B cell (primary cell): ENCODE measurements at regions of chr5 and their contacts with region 1.

Region 1: DNA sequence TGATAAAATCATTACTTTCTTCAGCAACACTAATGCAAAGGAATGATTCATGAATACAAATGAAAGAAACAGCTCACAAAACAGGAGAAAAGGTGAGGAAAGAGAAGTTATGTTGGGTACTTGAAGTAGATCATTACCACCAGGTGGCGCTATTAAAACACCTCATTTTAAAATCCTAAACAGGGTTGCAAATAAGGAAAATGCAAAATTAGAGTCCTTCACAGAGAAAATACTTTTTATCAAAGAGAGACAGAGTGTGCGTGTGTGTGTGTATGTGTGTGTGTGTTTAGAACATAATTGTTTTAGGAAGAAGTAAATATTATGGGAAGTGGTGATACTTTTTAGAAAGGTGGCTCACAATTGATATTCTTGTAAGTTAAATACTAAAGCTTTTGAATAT is 49.5 kb upstream of the CD180 start:
- DNase-seq: peak; percentile 78
- ATAC-seq: peak; percentile 31
- H3K4me3 ChIP-seq: no peak overlapping the region
- H3K4me3 Mint-ChIP-seq: no peak overlapping the region
- H3K27ac ChIP-seq: no peak overlapping the region
- H3K27ac Mint-ChIP-seq: no peak overlapping the region
- H3K4me1 ChIP-seq: peaks cover 5 to 8% of the 10 kb centered on the region in 2 donors
- H3K4me1 Mint-ChIP-seq: peaks cover 5% of the 10 kb centered on the region
- H3K27me3 ChIP-seq: no peaks in the 10 kb centered on the region
- H3K27me3 Mint-ChIP-seq: no peaks in the 10 kb centered on the region
- CTCF ChIP-seq: peak; percentile 93

Region 2: GRCh38 chr5:67165526-67166459 is 80.3 kb before region 1 on chr5:
- CTCF ChIA-PET with region 1: interaction called, 19 read pairs
- POLR2A ChIA-PET with region 1: no interaction called
- intact Hi-C with region 1: no loop called
- DNase-seq: peak; percentile 87
- ATAC-seq: peak; percentile 83
- H3K4me3 ChIP-seq: peak overlapping the region in 4 of 5 experiments; percentile 38 to 63 (median 55)
- H3K4me3 Mint-ChIP-seq: peak overlapping the region; percentile 89
- H3K27ac ChIP-seq: peak overlapping the region; percentile 78 to 83
- H3K27ac Mint-ChIP-seq: peak overlapping the region; percentile 97
- H3K4me1 ChIP-seq: peaks cover 26 to 34% of the 10 kb centered on the region in 2 donors
- H3K4me1 Mint-ChIP-seq: peaks cover 27% of the 10 kb centered on the region
- H3K27me3 ChIP-seq: no peaks in the 10 kb centered on the region
- H3K27me3 Mint-ChIP-seq: no peaks in the 10 kb centered on the region
- CTCF ChIP-seq: peak; percentile 80

Region 3: GRCh38 chr5:67221487-67222242 is 24.4 kb before region 1 on chr5:
- CTCF ChIA-PET with region 1: interaction called, 36 read pairs
- POLR2A ChIA-PET with region 1: no interaction called
- intact Hi-C with region 1: no loop called
- DNase-seq: peak; percentile 71
- ATAC-seq: peak; percentile 70
- H3K4me3 ChIP-seq: peak overlapping the region in 4 of 5 experiments; percentile 23 to 59 (median 42)
- H3K4me3 Mint-ChIP-seq: peak overlapping the region; percentile 87
- H3K27ac ChIP-seq: peak overlapping the region; percentile 61 to 71
- H3K27ac Mint-ChIP-seq: peak overlapping the region; percentile 97
- H3K4me1 ChIP-seq: peaks cover 41 to 48% of the 10 kb centered on the region in 2 donors
- H3K4me1 Mint-ChIP-seq: peaks cover 53% of the 10 kb centered on the region
- H3K27me3 ChIP-seq: no peaks in the 10 kb centered on the region
- H3K27me3 Mint-ChIP-seq: no peaks in the 10 kb centered on the region
- CTCF ChIP-seq: no peak

Region 4: GRCh38 chr5:67263656-67264408 is 17.7 kb after region 1 on chr5:
- CTCF ChIA-PET with region 1: interaction called, 16 read pairs
- POLR2A ChIA-PET with region 1: no interaction called
- intact Hi-C with region 1: no loop called
- DNase-seq: no peak
- ATAC-seq: no peak
- H3K4me3 ChIP-seq: no peak overlapping the region
- H3K4me3 Mint-ChIP-seq: no peak overlapping the region
- H3K27ac ChIP-seq: no peak overlapping the region
- H3K27ac Mint-ChIP-seq: no peak overlapping the region
- H3K4me1 ChIP-seq: no peaks in the 10 kb centered on the region
- H3K4me1 Mint-ChIP-seq: no peaks in the 10 kb centered on the region
- H3K27me3 ChIP-seq: no peaks in the 10 kb centered on the region
- H3K27me3 Mint-ChIP-seq: peaks cover 3% of the 10 kb centered on the region
- CTCF ChIP-seq: no peak

Region 5: DNA sequence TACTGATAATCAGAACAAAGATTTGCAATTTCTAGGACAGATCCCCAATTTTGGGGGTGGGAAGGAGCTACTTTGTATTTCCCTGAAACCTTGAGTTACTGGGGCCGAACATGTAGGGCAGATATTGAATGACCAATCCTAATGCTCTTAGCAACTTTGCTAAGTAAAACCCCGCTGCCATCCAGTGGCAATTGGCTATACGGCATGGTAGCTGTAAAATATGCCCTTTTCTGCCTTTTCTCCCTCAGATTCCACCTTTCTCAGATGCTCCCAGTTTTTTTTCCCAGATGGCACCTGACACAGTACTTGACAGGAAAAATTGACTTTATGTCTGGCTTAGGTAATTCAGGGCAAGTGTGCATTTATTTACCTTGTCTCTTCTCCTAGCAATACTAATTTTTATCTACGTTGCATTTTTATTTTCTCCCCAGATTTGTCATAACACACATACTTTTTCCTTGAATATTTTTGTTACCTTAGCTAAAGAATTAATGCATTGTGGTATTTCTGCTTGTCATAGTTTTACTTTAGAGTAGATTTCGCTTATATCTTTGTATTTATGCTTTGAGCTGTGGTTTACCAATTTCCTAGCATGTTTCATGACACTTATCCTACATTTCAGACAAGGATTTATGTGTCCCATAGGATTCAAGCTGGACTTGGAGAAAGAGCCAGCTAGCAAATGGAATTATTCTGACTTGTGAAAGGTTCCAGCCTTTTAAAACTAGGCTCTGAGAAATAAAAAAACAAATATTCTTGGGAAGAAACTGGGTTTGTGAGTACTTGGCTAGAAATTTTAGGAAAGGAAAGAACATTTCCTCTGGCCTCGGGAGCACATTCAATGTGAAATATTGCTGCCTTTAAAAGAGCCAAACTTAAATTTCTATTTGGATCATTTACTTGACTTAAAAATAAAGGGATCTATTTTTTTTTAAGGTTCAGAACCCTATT is 1006.8 kb after region 1 on chr5:
- CTCF ChIA-PET with region 1: interaction called, 116 read pairs
- POLR2A ChIA-PET with region 1: no interaction called
- intact Hi-C with region 1: loop called (anchors 1 kb)
- DNase-seq: peak; percentile 65
- ATAC-seq: peak; percentile 65
- H3K4me3 ChIP-seq: no peak overlapping the region
- H3K4me3 Mint-ChIP-seq: no peak overlapping the region
- H3K27ac ChIP-seq: no peak overlapping the region
- H3K27ac Mint-ChIP-seq: no peak overlapping the region
- H3K4me1 ChIP-seq: peaks cover 38% of the 10 kb centered on the region in 2 donors
- H3K4me1 Mint-ChIP-seq: peaks cover 78% of the 10 kb centered on the region
- H3K27me3 ChIP-seq: no peaks in the 10 kb centered on the region
- H3K27me3 Mint-ChIP-seq: no peaks in the 10 kb centered on the region
- CTCF ChIP-seq: peak; percentile 84

Region 6: DNA sequence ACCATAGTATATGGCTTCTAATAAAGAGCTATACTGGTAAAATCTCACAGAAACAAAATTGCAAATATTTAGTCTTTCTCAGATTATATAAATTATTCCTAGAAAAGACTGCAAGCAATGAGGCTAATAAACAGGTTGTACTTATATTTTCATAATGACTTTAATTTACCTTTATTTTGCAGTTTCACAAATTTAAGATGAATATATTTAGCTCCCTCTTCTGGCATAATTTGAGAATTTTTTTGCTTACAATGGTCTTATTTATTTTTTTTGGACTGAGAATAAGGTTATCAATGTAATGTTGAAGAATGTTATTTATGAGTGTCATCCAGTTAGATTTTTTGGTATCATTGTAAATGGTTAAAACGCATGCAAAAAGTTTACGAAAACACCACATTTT is 1026.2 kb after region 1 on chr5:
- CTCF ChIA-PET with region 1: interaction called, 82 read pairs
- POLR2A ChIA-PET with region 1: no interaction called
- intact Hi-C with region 1: loop called (anchors 1 kb)
- DNase-seq: peak; percentile 34
- ATAC-seq: no peak
- H3K4me3 ChIP-seq: no peak overlapping the region
- H3K4me3 Mint-ChIP-seq: no peak overlapping the region
- H3K27ac ChIP-seq: no peak overlapping the region
- H3K27ac Mint-ChIP-seq: no peak overlapping the region
- H3K4me1 ChIP-seq: peaks cover 14 to 22% of the 10 kb centered on the region in 2 donors
- H3K4me1 Mint-ChIP-seq: peaks cover 32% of the 10 kb centered on the region
- H3K27me3 ChIP-seq: no peaks in the 10 kb centered on the region
- H3K27me3 Mint-ChIP-seq: no peaks in the 10 kb centered on the region
- CTCF ChIP-seq: peak; percentile 67

Region 7: GRCh38 chr5:68315679-68316271 is 1069.7 kb after region 1 on chr5:
- CTCF ChIA-PET with region 1: no interaction called
- POLR2A ChIA-PET with region 1: no interaction called
- intact Hi-C with region 1: no loop called
- DNase-seq: peak; percentile 52
- ATAC-seq: peak; percentile 81
- H3K4me3 ChIP-seq: no peak overlapping the region
- H3K4me3 Mint-ChIP-seq: no peak overlapping the region
- H3K27ac ChIP-seq: no peak overlapping the region
- H3K27ac Mint-ChIP-seq: no peak overlapping the region
- H3K4me1 ChIP-seq: peaks cover 8 to 9% of the 10 kb centered on the region in 2 donors
- H3K4me1 Mint-ChIP-seq: peaks cover 12% of the 10 kb centered on the region
- H3K27me3 ChIP-seq: no peaks in the 10 kb centered on the region
- H3K27me3 Mint-ChIP-seq: peaks cover 3% of the 10 kb centered on the region
- CTCF ChIP-seq: no peak

Region 8: GRCh38 chr5:68460147-68460798 is 1214.2 kb after region 1 on chr5:
- CTCF ChIA-PET with region 1: interaction called, 14 read pairs
- POLR2A ChIA-PET with region 1: no interaction called
- intact Hi-C with region 1: loop called (anchors 1 kb)
- DNase-seq: peak; percentile 74
- ATAC-seq: peak; percentile 31
- H3K4me3 ChIP-seq: no peak overlapping the region
- H3K4me3 Mint-ChIP-seq: no peak overlapping the region
- H3K27ac ChIP-seq: no peak overlapping the region
- H3K27ac Mint-ChIP-seq: no peak overlapping the region
- H3K4me1 ChIP-seq: no peaks in the 10 kb centered on the region
- H3K4me1 Mint-ChIP-seq: no peaks in the 10 kb centered on the region
- H3K27me3 ChIP-seq: no peaks in the 10 kb centered on the region
- H3K27me3 Mint-ChIP-seq: no peaks in the 10 kb centered on the region
- CTCF ChIP-seq: peak; percentile 84